Activated CD8-positive, alpha-beta T cell treated with anti-CD3 and anti-CD28 coated beads for 36 hours (primary cell): ENCODE measurements at regions of chr14 and their contacts with region 1.

Region 1: DNA sequence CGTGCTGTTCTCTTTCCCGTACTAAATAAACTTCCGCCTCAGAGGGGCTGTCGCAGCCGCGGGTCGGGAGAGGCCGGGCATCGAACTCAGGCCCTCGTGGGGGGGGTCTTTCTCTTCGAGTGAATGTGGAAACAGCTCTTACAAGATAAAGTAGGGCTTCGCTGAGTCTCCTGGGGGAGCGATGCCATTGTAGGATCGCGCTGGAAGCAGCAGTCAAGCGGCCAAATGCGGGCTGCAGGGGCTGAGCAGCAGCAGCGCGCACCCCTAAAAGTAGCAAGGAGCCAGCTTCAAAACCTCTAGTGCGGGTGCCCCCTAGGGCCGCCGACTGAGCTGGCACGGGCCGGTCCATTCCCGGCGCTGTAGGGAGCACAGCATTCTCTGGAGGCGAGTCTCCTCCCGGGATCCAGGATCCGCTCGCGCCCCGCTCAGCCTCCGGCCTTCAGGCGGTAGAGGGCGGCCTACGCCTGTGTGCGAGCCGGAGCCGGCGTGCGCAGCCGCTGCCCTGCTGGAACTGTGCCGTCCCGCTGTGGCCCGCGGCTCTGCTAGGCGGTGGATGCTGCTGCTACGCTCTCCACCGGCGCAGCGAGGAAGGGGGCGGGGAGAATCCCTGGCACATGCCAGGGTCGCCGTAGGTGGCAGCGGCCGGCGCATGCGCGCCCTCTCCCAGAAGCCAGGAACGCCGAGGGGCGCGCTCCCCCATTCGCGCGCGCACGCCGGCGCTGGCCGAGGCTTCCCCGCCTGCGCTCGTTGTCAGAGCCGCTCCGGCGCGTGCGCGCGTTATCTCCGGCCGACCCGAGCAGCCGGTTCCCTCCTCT is at the start of gene FUT8:
- DNase-seq: peak; percentile 97
- ATAC-seq: peak; percentile 91
- H3K4me3 Mint-ChIP-seq: peak within 1 kb of the TSS; percentile 95
- H3K27ac Mint-ChIP-seq: peak within 1 kb of the TSS; percentile 98
- H3K4me1 Mint-ChIP-seq: peaks cover 46% of the 10 kb centered on the region
- H3K27me3 Mint-ChIP-seq: no peaks in the 10 kb centered on the region
- CTCF ChIP-seq: peak; percentile 66
- total RNA-seq, gene FUT8: 55.7 to 61.0 TPM

Region 2: DNA sequence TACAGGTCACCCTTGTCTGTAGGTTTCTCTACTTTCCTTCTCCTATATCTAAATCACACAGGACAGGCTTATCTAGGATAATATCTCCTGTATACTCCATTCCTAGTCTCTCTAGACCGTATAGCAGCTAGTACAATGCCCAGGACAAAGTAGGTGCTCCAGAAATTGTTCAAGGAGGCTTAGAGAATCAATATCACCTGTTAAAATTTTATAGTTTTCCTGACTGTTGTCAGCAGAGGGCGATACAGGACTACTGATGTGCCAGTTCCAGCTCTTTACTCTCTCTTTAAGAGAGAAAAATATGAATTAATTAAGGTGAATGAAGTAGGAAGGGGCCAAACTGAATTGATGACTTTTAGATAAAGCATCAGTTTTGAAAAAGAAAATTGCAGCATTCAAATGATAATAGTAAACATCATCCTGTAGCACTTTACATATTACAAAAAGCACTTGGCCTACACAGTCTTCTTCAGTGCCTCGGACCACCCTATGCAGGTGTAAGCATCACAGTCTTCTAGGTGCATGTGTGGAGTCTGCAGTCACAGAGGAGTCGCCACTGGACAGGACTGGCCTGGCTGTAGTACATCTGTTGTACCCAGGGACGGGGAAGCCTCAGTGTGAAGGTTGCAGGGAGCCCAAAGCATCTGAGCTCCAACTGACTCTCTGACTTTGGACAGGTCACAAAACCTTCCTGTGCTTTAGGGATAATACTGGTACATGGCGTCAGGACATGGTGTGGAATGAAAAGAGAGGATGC is 248.0 kb before region 1 on chr14:
- CTCF ChIA-PET with region 1: interaction called, 47 read pairs
- POLR2A ChIA-PET with region 1: interaction called, 4 read pairs
- intact Hi-C with region 1: loop called (anchors 5 kb)
- DNase-seq: peak; percentile 54
- ATAC-seq: peak; percentile 65
- H3K4me3 Mint-ChIP-seq: no peak overlapping the region
- H3K27ac Mint-ChIP-seq: no peak overlapping the region
- H3K4me1 Mint-ChIP-seq: peaks cover 24% of the 10 kb centered on the region
- H3K27me3 Mint-ChIP-seq: no peaks in the 10 kb centered on the region
- CTCF ChIP-seq: peak; percentile 79

Region 3: GRCh38 chr14:65206448-65207096 is 205.7 kb before region 1 on chr14:
- CTCF ChIA-PET with region 1: interaction called, 11 read pairs
- POLR2A ChIA-PET with region 1: interaction called, 4 read pairs
- intact Hi-C with region 1: no loop called
- DNase-seq: peak; percentile 57
- ATAC-seq: peak; percentile 78
- H3K4me3 Mint-ChIP-seq: peak overlapping the region; percentile 53
- H3K27ac Mint-ChIP-seq: peak overlapping the region; percentile 87
- H3K4me1 Mint-ChIP-seq: peaks cover 60% of the 10 kb centered on the region
- H3K27me3 Mint-ChIP-seq: no peaks in the 10 kb centered on the region
- CTCF ChIP-seq: no peak

Region 4: DNA sequence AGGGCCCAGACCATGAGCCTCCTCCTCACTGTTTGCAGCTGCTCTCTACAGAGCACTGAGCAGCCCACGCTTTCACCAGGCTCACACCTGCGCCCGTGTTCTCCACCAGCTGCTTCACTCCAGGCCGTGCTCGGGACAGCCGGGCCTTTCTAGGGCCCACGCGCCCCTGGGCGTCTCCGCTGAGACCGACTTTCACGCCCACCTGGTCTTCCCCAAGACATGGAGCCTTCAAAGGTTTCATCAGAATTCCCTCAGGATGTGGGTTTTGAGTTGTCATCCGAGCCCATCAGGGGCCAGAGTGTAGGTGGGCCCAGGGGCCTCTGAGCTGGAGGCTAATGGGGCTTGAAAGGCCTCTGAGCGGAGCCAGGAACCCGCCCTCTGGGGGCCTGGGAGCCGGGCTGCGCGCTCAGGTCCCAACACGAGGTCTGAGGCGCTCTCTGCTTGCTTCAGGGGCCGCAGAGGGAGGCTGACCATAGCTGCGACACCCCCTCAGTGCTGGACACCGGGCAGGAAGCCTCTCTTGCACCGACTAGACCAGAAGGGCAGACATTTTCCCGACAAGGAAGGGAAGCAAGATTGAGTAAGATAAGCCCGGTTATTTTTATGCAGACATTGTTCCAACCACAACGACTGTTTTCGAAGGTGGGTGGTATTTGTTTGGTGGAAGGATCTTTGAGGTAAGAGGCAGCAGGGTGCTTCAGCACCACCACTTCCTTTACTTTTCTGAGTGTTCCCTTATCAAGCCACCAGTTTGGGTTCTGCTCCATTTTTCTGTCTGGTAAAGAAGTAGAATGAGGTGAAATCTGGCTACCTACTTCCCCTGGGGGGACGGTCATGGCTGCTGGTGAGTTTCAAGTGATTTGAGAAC is 124.7 kb before region 1 on chr14:
- CTCF ChIA-PET with region 1: interaction called, 42 read pairs
- POLR2A ChIA-PET with region 1: interaction called, 31 read pairs
- intact Hi-C with region 1: loop called (anchors 5 kb)
- DNase-seq: peak; percentile 86
- ATAC-seq: peak; percentile 76
- H3K4me3 Mint-ChIP-seq: peak overlapping the region; percentile 76
- H3K27ac Mint-ChIP-seq: peak overlapping the region; percentile 98
- H3K4me1 Mint-ChIP-seq: peaks cover 70% of the 10 kb centered on the region
- H3K27me3 Mint-ChIP-seq: no peaks in the 10 kb centered on the region
- CTCF ChIP-seq: no peak

Region 5: DNA sequence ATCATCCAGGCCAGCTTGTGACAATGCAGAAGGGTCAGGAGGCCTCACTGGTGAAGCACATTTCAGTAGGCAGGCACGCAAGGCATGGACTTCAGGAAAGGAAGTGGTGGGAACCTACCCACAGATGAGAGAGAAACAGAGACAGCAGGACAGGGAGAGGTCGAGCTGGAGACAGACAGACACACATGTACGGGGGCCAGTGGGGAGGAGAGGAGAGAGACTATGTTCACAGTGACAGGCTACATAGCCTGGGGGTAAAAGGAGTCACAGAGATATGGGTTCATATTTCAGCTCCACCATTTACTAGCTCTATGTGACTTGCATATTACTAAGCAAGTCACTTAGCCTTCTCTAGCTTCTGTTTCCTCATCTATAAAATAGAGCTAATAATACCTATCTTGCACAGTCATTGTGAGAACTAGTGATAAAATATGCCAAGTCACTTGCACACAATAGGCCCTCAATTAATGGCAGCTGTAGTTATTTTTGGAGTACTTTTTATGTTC is 90.8 kb before region 1 on chr14:
- CTCF ChIA-PET with region 1: interaction called, 10 read pairs
- POLR2A ChIA-PET with region 1: no interaction called
- intact Hi-C with region 1: no loop called
- DNase-seq: peak; percentile 50
- ATAC-seq: peak; percentile 87
- H3K4me3 Mint-ChIP-seq: peak overlapping the region; percentile 34
- H3K27ac Mint-ChIP-seq: peak overlapping the region; percentile 86
- H3K4me1 Mint-ChIP-seq: peaks cover 45% of the 10 kb centered on the region
- H3K27me3 Mint-ChIP-seq: no peaks in the 10 kb centered on the region
- CTCF ChIP-seq: no peak

Region 6: GRCh38 chr14:65847075-65847847 is 435.0 kb after region 1 on chr14:
- CTCF ChIA-PET with region 1: interaction called, 13 read pairs
- POLR2A ChIA-PET with region 1: interaction called, 3 read pairs
- intact Hi-C with region 1: no loop called
- DNase-seq: peak; percentile 86
- ATAC-seq: peak; percentile 80
- H3K4me3 Mint-ChIP-seq: peak overlapping the region; percentile 38
- H3K27ac Mint-ChIP-seq: peak overlapping the region; percentile 82
- H3K4me1 Mint-ChIP-seq: peaks cover 67% of the 10 kb centered on the region
- H3K27me3 Mint-ChIP-seq: no peaks in the 10 kb centered on the region
- CTCF ChIP-seq: no peak